Endothelial cell of umbilical vein (primary cell): ENCODE measurements at regions of chr17 and their contacts with region 1.

Region 1: GRCh38 chr17:48259694-48260291 is 152.2 kb downstream of the SNX11 start:
- DNase-seq: peak; percentile 62
- H3K4me3 ChIP-seq: no peak overlapping the region
- H3K27ac ChIP-seq: no peak overlapping the region
- H3K4me1 ChIP-seq: peaks cover 18% of the 10 kb centered on the region
- H3K27me3 ChIP-seq: no peaks in the 10 kb centered on the region
- CTCF ChIP-seq: peak; percentile 49 to 53
- POLR2A ChIP-seq: no peak

Region 2: DNA sequence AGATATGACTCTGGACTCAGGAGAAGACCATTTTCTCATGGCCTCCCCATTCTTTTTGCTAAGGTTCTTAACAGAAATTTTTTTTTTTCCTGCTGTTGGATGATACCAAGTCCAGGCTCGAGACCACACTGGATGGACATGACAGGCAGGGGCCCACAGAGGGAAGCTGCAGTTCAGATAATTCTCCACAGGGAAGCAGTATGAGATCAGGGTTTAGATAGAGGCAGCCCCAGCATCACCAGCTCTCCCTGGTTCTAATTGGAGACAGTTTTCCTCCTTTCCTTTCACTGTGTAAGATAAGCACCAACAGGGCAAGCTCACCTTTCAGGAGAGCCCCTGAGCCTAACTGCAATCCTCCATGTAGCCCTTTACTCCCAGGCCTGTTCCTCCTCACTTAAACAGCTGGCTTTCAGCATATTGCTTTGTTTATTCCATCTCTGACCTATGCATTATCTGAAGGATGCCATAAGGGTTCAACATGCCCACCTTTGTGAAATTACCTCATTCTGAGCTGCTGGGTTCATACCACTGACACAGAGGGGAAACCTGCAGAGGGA is 44.1 kb before region 1 on chr17:
- CTCF ChIA-PET with region 1: interaction called, 131 read pairs
- POLR2A ChIA-PET with region 1: no interaction called
- dilution Hi-C with region 1: no loop called
- intact Hi-C with region 1: loop called (anchors 1 kb)
- DNase-seq: peak; percentile 74
- H3K4me3 ChIP-seq: no peak overlapping the region
- H3K27ac ChIP-seq: no peak overlapping the region
- H3K4me1 ChIP-seq: peaks cover 3% of the 10 kb centered on the region
- H3K27me3 ChIP-seq: no peaks in the 10 kb centered on the region
- CTCF ChIP-seq: peak; percentile 71 to 90
- POLR2A ChIP-seq: no peak

Region 3: DNA sequence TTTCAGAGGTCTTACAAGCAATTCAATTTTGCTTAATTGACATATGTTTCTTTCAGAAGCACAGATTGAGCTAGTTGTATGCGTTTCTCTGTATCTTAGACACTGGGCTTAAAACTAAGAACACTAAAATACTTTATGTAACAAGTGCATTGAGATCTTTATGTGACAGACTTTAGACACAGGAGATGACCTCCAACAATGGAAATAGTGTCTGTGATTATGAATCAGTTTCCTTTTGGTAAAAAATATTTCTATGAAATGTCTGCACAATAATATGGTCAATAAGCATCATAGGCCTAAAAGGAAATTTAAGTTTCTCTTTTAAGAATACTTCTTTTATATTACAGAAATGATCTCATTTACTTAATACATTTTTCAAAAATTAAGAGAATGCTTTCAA is 17.0 kb after region 1 on chr17:
- CTCF ChIA-PET with region 1: interaction called, 32 read pairs
- POLR2A ChIA-PET with region 1: no interaction called
- dilution Hi-C with region 1: no loop called
- intact Hi-C with region 1: no loop called
- DNase-seq: peak; percentile 22
- H3K4me3 ChIP-seq: no peak overlapping the region
- H3K27ac ChIP-seq: no peak overlapping the region
- H3K4me1 ChIP-seq: peaks cover 5% of the 10 kb centered on the region
- H3K27me3 ChIP-seq: no peaks in the 10 kb centered on the region
- CTCF ChIP-seq: no peak
- POLR2A ChIP-seq: no peak

Region 4: GRCh38 chr17:48322060-48322459 is 62.3 kb after region 1 on chr17:
- CTCF ChIA-PET with region 1: interaction called, 37 read pairs
- POLR2A ChIA-PET with region 1: no interaction called
- dilution Hi-C with region 1: no loop called
- intact Hi-C with region 1: no loop called
- DNase-seq: no peak
- H3K4me3 ChIP-seq: no peak overlapping the region
- H3K27ac ChIP-seq: no peak overlapping the region
- H3K4me1 ChIP-seq: no peaks in the 10 kb centered on the region
- H3K27me3 ChIP-seq: no peaks in the 10 kb centered on the region
- CTCF ChIP-seq: peak in 1 of 2 donors; percentile 8
- POLR2A ChIP-seq: no peak

Region 5: GRCh38 chr17:48351831-48352332 is 92.1 kb after region 1 on chr17:
- CTCF ChIA-PET with region 1: interaction called, 20 read pairs
- POLR2A ChIA-PET with region 1: no interaction called
- dilution Hi-C with region 1: no loop called
- intact Hi-C with region 1: no loop called
- DNase-seq: peak; percentile 69
- H3K4me3 ChIP-seq: no peak overlapping the region
- H3K27ac ChIP-seq: no peak overlapping the region
- H3K4me1 ChIP-seq: no peaks in the 10 kb centered on the region
- H3K27me3 ChIP-seq: peaks cover 2 to 4% of the 10 kb centered on the region in 2 experiments
- CTCF ChIP-seq: peak; percentile 28 to 42
- POLR2A ChIP-seq: no peak

Region 6: GRCh38 chr17:48427598-48427997 is 167.8 kb after region 1 on chr17:
- CTCF ChIA-PET with region 1: no interaction called
- POLR2A ChIA-PET with region 1: no interaction called
- dilution Hi-C with region 1: no loop called
- intact Hi-C with region 1: no loop called
- DNase-seq: no peak
- H3K4me3 ChIP-seq: no peak overlapping the region
- H3K27ac ChIP-seq: no peak overlapping the region
- H3K4me1 ChIP-seq: peaks cover 12% of the 10 kb centered on the region
- H3K27me3 ChIP-seq: peaks cover 34 to 42% of the 10 kb centered on the region in 2 experiments
- CTCF ChIP-seq: no peak
- POLR2A ChIP-seq: no peak

Region 7: DNA sequence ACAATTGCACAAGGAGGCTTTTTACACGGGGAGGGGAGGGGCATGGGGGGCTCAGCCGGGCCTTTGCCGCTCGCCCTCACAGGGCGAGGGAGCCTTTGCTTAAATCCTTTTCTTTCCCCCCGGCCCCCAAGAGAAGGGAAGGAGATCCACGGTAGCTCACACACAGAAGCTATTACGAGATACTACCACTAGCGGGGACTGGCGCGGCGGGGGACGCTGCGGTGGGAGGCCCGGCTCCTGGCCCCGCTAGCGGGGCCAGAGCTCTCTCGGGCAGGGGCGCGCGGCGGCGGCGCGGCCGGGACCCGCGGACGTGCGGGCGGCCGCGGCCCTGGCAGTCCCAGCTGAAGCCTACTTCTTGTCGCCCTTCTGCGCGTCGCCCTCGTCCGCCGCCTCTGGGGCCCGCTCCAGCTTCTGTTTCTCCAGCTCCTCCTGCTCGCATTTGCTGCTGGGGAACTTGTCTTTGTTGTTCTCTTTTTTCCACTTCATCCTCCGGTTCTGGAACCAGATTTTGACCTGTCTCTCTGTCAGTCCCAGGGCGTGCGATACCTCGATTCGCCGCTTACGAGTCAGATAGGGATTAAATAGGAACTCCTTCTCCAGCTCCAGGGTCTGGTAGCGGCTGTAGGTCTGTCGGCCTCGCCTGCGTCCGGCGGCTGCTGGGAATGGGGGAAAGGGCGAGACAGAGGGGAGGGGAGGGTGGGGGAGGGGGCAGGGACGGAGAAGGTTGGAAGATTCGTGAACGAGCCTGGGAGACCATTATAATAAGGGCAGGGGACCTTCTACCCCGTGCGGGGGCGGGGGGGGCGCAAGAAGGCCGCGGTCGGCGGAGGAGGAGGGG is 353.3 kb after region 1 on chr17:
- CTCF ChIA-PET with region 1: interaction called, 37 read pairs
- POLR2A ChIA-PET with region 1: interaction called, 6 read pairs
- dilution Hi-C with region 1: no loop called
- intact Hi-C with region 1: loop called (anchors 1 kb)
- DNase-seq: peak; percentile 67
- H3K4me3 ChIP-seq: peak overlapping the region; percentile 52 to 86 (median 80)
- H3K27ac ChIP-seq: peak overlapping the region; percentile 47
- H3K4me1 ChIP-seq: peaks cover 38% of the 10 kb centered on the region
- H3K27me3 ChIP-seq: peaks cover 28 to 35% of the 10 kb centered on the region in 2 experiments
- CTCF ChIP-seq: peak; percentile 4 to 47
- POLR2A ChIP-seq: no peak